ENCODE measurements at regions of chr5 and their contacts with region 1.

Region 1: GRCh38 chr5:65481635-65482295 is at the start of gene ADAMTS6:
- DNase-seq: peak; percentile 88 to 96
- H3K4me3 ChIP-seq: peak within 1 kb of the TSS; percentile 23
- CTCF ChIP-seq: no peak
- POLR2A ChIP-seq: no peak
- total RNA-seq, gene ADAMTS6: 0.42 to 1.1 (median 0.82) TPM

Region 2: DNA sequence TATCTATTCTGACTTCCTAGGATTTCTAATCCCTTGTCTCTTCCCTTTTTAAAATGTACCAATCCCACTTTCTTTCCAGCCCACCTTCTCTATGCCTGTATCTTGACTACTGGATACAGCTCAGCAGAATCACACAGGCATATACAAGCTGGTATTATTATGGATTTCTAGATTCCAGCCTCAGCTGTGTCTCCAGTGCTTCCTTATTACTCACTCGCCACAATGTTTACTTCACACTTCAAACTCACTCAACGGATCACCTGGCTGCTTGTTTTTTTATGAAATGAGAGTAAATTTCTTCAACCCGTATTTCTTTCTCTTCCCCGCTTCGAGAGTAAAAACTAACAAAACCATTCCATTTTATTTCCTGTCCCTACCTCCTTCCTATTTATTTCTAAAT is 674.2 kb before region 1 on chr5:
- intact Hi-C with region 1: loop called (anchors 10 kb)
- DNase-seq: no peak
- H3K4me3 ChIP-seq: no peak overlapping the region
- CTCF ChIP-seq: no peak
- POLR2A ChIP-seq: no peak

Region 3: GRCh38 chr5:65262649-65263059 is 219.1 kb before region 1 on chr5:
- intact Hi-C with region 1: no loop called
- DNase-seq: no peak
- H3K4me3 ChIP-seq: no peak overlapping the region
- CTCF ChIP-seq: no peak
- POLR2A ChIP-seq: no peak

Region 4: DNA sequence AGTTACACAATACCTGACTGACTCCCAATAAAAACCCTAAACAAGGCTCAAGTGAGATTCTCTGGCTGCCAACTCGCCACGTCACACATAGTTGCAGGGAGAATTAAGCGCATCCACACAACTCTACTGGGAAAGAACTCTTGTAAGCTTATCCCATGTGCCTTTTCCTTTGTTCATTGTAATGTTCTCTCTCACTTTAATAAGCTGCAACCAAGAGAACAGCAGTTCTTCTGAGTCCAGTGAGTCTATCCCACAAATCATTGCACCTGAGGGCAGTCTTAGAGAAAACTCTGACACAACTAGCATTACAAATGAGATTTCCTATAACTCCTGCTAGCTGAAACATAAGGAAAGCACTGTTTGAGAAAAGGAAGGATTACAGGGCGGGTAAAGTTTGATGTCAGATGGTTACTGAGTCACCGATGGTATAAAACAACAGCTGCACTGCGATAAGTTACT is 53.8 kb after region 1 on chr5:
- intact Hi-C with region 1: no loop called
- DNase-seq: no peak
- H3K4me3 ChIP-seq: no peak overlapping the region
- CTCF ChIP-seq: no peak
- POLR2A ChIP-seq: no peak